A549 (cell line): ENCODE measurements at regions of chr5 and their contacts with region 1.

Region 1: DNA sequence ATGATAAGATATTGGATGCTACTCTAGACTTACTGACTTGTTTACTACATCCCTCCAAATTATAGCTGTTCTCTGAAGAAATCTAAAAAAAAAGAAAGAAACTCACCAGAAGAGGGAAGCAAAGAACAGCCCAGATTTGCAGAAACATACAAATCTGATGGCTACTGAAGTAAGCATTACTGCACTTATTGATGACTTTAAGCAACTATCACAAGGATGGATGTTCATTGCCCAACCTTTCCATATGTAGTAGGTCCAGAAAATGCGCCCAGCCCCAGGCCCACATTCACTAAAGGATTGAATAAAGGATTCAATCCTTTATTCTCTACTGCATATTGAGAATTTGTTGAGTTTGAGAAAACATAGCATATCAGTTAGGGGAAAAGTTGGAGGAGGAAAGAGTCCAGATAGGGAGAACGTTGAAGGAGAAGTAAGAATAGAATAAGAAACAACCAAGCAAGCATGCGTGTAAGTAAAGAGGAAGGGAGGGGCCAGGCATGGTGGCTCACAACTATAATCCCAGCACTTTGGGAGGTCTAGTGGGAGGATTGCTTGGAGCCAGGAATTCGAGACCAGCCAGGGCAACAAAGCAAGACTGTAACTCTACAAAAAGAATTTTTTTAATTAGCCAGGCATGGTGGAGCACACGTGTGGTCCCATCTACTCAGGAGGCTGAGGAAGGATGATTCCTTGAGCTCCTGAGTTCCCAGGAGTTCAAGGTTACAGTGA is 33.8 kb upstream of the DTWD2 start:
- DNase-seq: peak; percentile 18 to 55
- ATAC-seq: peak; percentile 84 to 90
- H3K4me3 ChIP-seq: no peak overlapping the region
- H3K27ac ChIP-seq: no peak overlapping the region
- H3K4me1 ChIP-seq: peaks cover 14% of the 10 kb centered on the region
- CTCF ChIP-seq: peak; percentile 71
- EP300 ChIP-seq: no peak
- POLR2A ChIP-seq: no peak
- RAD21 ChIP-seq: peak; percentile 83 to 85

Region 2: DNA sequence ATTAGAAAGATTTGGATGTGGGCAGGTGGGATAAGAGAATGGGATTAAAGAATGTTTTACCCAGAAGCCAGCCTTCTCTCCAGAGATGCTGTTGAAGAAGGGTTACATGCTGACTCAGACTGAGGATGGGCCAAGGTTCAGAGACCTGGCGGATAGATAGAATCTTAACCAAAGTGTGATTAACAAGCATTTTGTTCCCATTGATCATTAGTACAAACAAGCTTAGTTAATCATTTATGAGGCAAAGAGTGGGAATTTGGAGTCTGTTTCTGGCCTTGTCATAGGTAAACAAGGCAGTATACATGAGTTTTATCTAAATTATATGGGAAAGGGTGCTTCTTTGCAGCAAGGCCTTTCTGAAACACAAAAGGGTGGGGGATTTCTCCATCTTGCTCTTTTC is 13.1 kb before region 1 on chr5:
- CTCF ChIA-PET with region 1: interaction called, 11 read pairs
- POLR2A ChIA-PET with region 1: no interaction called
- DNase-seq: peak; percentile 13 to 41
- ATAC-seq: peak in 1 of 2 experiments; percentile 68; a peak in 2 of 6 replicates
- H3K4me3 ChIP-seq: no peak overlapping the region
- H3K27ac ChIP-seq: no peak overlapping the region
- H3K4me1 ChIP-seq: peaks cover 11% of the 10 kb centered on the region; the same call in 1 of the 3 replicates
- CTCF ChIP-seq: no peak
- EP300 ChIP-seq: no peak
- POLR2A ChIP-seq: no peak
- RAD21 ChIP-seq: no peak

Region 3: GRCh38 chr5:119083679-119084078 is 61.5 kb after region 1 on chr5:
- CTCF ChIA-PET with region 1: no interaction called
- POLR2A ChIA-PET with region 1: no interaction called
- DNase-seq: no peak
- ATAC-seq: no peak
- H3K4me3 ChIP-seq: no peak overlapping the region
- H3K27ac ChIP-seq: no peak overlapping the region
- H3K4me1 ChIP-seq: no peaks in the 10 kb centered on the region
- CTCF ChIP-seq: no peak
- EP300 ChIP-seq: no peak
- POLR2A ChIP-seq: no peak
- RAD21 ChIP-seq: no peak